Activated T-helper 1 cell treated with anti-CD3 and anti-CD28 coated beads, Interleukin-12 subunit alpha, Interleukin-12 subunit beta, Interleukin-2, Interleukin-4 antibody, amounts not matched to agents 30 ng/mL and 10 ng/mL and 1 ng/mL, durations not matched to agents 14 hours and 24 hours and 36 hours (primary cell): ENCODE measurements at regions of chr6 and their contacts with region 1.

Region 1: GRCh38 chr6:145963216-145964068 is 716 bp downstream of the SHPRH start:
- DNase-seq: peak; percentile 19
- H3K4me3 Mint-ChIP-seq: peak overlapping the region; percentile 98
- H3K27ac Mint-ChIP-seq: peak overlapping the region; percentile 93
- H3K4me1 Mint-ChIP-seq: peaks cover 40% of the 10 kb centered on the region
- H3K27me3 Mint-ChIP-seq: no peaks in the 10 kb centered on the region

Region 2: GRCh38 chr6:145734486-145735355 is 228.7 kb before region 1 on chr6:
- intact Hi-C with region 1: loop called (anchors 1 kb)
- DNase-seq: peak; percentile 52
- H3K4me3 Mint-ChIP-seq: peak overlapping the region; percentile 94
- H3K27ac Mint-ChIP-seq: peak overlapping the region; percentile 96
- H3K4me1 Mint-ChIP-seq: peaks cover 26% of the 10 kb centered on the region
- H3K27me3 Mint-ChIP-seq: no peaks in the 10 kb centered on the region

Region 3: DNA sequence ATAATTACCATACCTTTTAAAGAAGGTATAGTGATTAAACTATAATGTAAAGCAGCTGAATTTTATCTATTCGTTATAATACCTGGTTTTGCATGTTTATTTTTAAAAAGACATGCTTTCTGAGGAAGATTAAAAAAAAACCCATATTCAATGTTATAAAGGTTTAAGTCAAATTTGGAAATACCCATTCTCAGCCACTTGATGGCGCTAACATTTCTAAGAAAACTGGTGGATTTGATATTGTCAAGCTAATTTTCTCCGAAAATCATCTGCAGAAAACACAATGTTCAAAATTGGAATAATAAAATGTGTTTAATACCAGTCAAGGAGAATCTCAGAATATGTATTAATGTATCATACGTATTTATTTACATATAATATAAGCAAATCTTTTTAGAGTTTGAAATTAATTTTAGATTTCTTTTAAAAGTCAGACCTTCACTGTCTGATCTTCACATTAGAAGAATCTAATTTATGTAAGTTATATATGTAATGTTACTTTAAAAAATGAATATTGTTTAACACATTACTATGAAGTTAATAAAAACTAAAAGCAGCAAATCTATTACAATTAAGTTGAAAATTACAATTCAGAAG is 34.3 kb before region 1 on chr6:
- intact Hi-C with region 1: loop called (anchors 2 kb)
- DNase-seq: no peak
- H3K4me3 Mint-ChIP-seq: no peak overlapping the region
- H3K27ac Mint-ChIP-seq: no peak overlapping the region
- H3K4me1 Mint-ChIP-seq: no peaks in the 10 kb centered on the region
- H3K27me3 Mint-ChIP-seq: no peaks in the 10 kb centered on the region

Region 4: GRCh38 chr6:146154197-146154596 is 190.8 kb after region 1 on chr6:
- intact Hi-C with region 1: no loop called
- DNase-seq: no peak
- H3K4me3 Mint-ChIP-seq: no peak overlapping the region
- H3K27ac Mint-ChIP-seq: no peak overlapping the region
- H3K4me1 Mint-ChIP-seq: no peaks in the 10 kb centered on the region
- H3K27me3 Mint-ChIP-seq: peaks cover 2% of the 10 kb centered on the region

Region 5: GRCh38 chr6:146200176-146200575 is 236.7 kb after region 1 on chr6:
- intact Hi-C with region 1: no loop called
- DNase-seq: no peak
- H3K4me3 Mint-ChIP-seq: no peak overlapping the region
- H3K27ac Mint-ChIP-seq: no peak overlapping the region
- H3K4me1 Mint-ChIP-seq: no peaks in the 10 kb centered on the region
- H3K27me3 Mint-ChIP-seq: no peaks in the 10 kb centered on the region

Region 6: GRCh38 chr6:146357578-146358430 is 394.4 kb after region 1 on chr6:
- intact Hi-C with region 1: loop called (anchors 5 kb)
- DNase-seq: no peak
- H3K4me3 Mint-ChIP-seq: no peak overlapping the region
- H3K27ac Mint-ChIP-seq: peak overlapping the region; percentile 74
- H3K4me1 Mint-ChIP-seq: peaks cover 13% of the 10 kb centered on the region
- H3K27me3 Mint-ChIP-seq: no peaks in the 10 kb centered on the region

Region 7: DNA sequence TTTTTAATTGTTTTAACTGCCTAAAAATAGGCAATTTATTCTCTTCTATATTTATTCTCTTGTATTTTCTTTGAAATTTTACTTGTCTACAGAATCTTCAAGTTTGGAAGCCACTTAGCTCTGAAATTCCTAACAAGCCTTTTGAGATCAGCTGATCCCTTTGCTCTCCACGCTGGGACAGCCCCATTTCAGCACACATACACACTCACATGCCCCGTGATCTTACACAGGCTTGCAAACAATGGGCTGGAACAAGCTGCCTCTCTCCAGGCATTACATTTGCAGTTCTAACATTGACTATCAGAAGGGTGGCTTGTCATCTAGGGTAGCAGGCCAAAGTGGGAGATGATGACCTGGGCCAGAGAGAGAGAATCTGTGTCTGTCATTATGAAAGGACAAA is 518.1 kb after region 1 on chr6:
- intact Hi-C with region 1: no loop called
- DNase-seq: no peak
- H3K4me3 Mint-ChIP-seq: no peak overlapping the region
- H3K27ac Mint-ChIP-seq: no peak overlapping the region
- H3K4me1 Mint-ChIP-seq: no peaks in the 10 kb centered on the region
- H3K27me3 Mint-ChIP-seq: peaks cover 2% of the 10 kb centered on the region

Region 8: GRCh38 chr6:147202516-147203312 is 1239.3 kb after region 1 on chr6:
- intact Hi-C with region 1: loop called (anchors 5 kb)
- DNase-seq: peak; percentile 77
- H3K4me3 Mint-ChIP-seq: peak overlapping the region; percentile 89
- H3K27ac Mint-ChIP-seq: peak overlapping the region; percentile 98
- H3K4me1 Mint-ChIP-seq: peaks cover 39% of the 10 kb centered on the region
- H3K27me3 Mint-ChIP-seq: no peaks in the 10 kb centered on the region